Activated CD4-positive, alpha-beta T cell treated with anti-CD3 and anti-CD28 coated beads for 36 hours (primary cell): ENCODE measurements at regions of chr1 and their contacts with region 1.

Region 1: GRCh38 chr1:6464514-6464836 is 1.5 kb downstream of the TNFRSF25 start:
- DNase-seq: peak; percentile 80
- ATAC-seq: peak; percentile 21
- H3K4me3 Mint-ChIP-seq: peak overlapping the region; percentile 84
- H3K27ac Mint-ChIP-seq: peak overlapping the region; percentile 83
- H3K4me1 Mint-ChIP-seq: peaks cover 50% of the 10 kb centered on the region
- H3K27me3 Mint-ChIP-seq: no peaks in the 10 kb centered on the region

Region 2: GRCh38 chr1:6438047-6438525 is 26.4 kb before region 1 on chr1:
- CTCF ChIA-PET with region 1: interaction called, 12 read pairs
- POLR2A ChIA-PET with region 1: no interaction called
- intact Hi-C with region 1: no loop called
- DNase-seq: peak; percentile 85
- ATAC-seq: peak; percentile 72
- H3K4me3 Mint-ChIP-seq: no peak overlapping the region
- H3K27ac Mint-ChIP-seq: no peak overlapping the region
- H3K4me1 Mint-ChIP-seq: peaks cover 2% of the 10 kb centered on the region
- H3K27me3 Mint-ChIP-seq: peaks cover 16% of the 10 kb centered on the region

Region 3: GRCh38 chr1:6445062-6445763 is 19.3 kb before region 1 on chr1:
- CTCF ChIA-PET with region 1: interaction called, 3 read pairs
- POLR2A ChIA-PET with region 1: no interaction called
- intact Hi-C with region 1: loop called in 1 of 2 experiments (anchors 2 kb)
- DNase-seq: peak; percentile 63
- ATAC-seq: peak; percentile 28
- H3K4me3 Mint-ChIP-seq: no peak overlapping the region
- H3K27ac Mint-ChIP-seq: no peak overlapping the region
- H3K4me1 Mint-ChIP-seq: peaks cover 17% of the 10 kb centered on the region
- H3K27me3 Mint-ChIP-seq: peaks cover 31% of the 10 kb centered on the region